SK-N-SH (cell line): ENCODE measurements at regions of chr11 and their contacts with region 1.

Region 1: GRCh38 chr11:128630367-128631230 is 43.2 kb upstream of the ETS1 start:
- DNase-seq: peak; percentile 83
- H3K4me3 ChIP-seq: peak overlapping the region in 1 of 2 experiments; percentile 50; a peak in 1 of 4 replicates
- H3K27ac ChIP-seq: peak overlapping the region; percentile 27 to 50; a peak in 2 of 4 replicates
- H3K4me1 ChIP-seq: peaks cover 0 to 14% of the 10 kb centered on the region in 2 experiments; a peak in 2 of 4 replicates
- H3K27me3 ChIP-seq: no peaks in the 10 kb centered on the region
- CTCF ChIP-seq: peak; percentile 97
- EP300 ChIP-seq: no peak
- RAD21 ChIP-seq: peak; percentile 98

Region 2: DNA sequence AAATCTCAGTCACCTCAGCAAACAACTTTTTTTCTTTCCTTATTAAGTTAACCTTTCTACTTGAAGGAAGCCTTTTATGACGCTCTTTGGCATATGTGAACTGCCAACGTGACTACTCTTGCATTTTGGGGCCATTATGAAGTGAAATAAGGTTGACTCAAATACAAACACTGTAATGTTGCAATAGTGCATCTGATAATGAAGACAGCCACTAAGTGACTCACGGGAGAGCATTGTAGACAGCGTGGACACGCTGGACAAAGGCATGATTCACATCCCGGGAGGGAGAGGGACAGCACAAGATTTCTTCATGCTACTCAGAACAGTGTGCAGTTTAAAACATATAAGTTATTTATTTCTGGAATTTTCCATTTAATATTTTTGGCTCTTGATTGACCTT is 604.0 kb before region 1 on chr11:
- CTCF ChIA-PET with region 1: interaction called, 13 read pairs
- POLR2A ChIA-PET with region 1: no interaction called
- DNase-seq: no peak
- H3K4me3 ChIP-seq: no peak overlapping the region
- H3K27ac ChIP-seq: peak overlapping the region in 1 of 2 experiments; percentile 69; a peak in 2 of 4 replicates
- H3K4me1 ChIP-seq: peaks cover 5 to 14% of the 10 kb centered on the region in 2 experiments; a peak in 2 of 4 replicates
- H3K27me3 ChIP-seq: no peaks in the 10 kb centered on the region
- CTCF ChIP-seq: no peak
- EP300 ChIP-seq: peak in 1 of 2 experiments; percentile 88; a peak in 2 of 4 replicates
- RAD21 ChIP-seq: no peak

Region 3: GRCh38 chr11:128180446-128181087 is 450.0 kb before region 1 on chr11:
- CTCF ChIA-PET with region 1: interaction called, 16 read pairs
- POLR2A ChIA-PET with region 1: no interaction called
- DNase-seq: no peak
- H3K4me3 ChIP-seq: no peak overlapping the region
- H3K27ac ChIP-seq: peak overlapping the region; percentile 39 to 64
- H3K4me1 ChIP-seq: peaks cover 24 to 29% of the 10 kb centered on the region in 2 experiments
- H3K27me3 ChIP-seq: no peaks in the 10 kb centered on the region
- CTCF ChIP-seq: no peak
- EP300 ChIP-seq: peak in 1 of 2 experiments; percentile 87; a peak in 2 of 4 replicates
- RAD21 ChIP-seq: no peak

Region 4: GRCh38 chr11:128299132-128299726 is 331.4 kb before region 1 on chr11:
- CTCF ChIA-PET with region 1: interaction called, 11 read pairs
- POLR2A ChIA-PET with region 1: no interaction called
- DNase-seq: no peak
- H3K4me3 ChIP-seq: no peak overlapping the region
- H3K27ac ChIP-seq: no peak overlapping the region
- H3K4me1 ChIP-seq: peaks cover 0 to 20% of the 10 kb centered on the region in 2 experiments; a peak in 2 of 4 replicates
- H3K27me3 ChIP-seq: no peaks in the 10 kb centered on the region
- CTCF ChIP-seq: no peak
- EP300 ChIP-seq: no peak
- RAD21 ChIP-seq: no peak

Region 5: DNA sequence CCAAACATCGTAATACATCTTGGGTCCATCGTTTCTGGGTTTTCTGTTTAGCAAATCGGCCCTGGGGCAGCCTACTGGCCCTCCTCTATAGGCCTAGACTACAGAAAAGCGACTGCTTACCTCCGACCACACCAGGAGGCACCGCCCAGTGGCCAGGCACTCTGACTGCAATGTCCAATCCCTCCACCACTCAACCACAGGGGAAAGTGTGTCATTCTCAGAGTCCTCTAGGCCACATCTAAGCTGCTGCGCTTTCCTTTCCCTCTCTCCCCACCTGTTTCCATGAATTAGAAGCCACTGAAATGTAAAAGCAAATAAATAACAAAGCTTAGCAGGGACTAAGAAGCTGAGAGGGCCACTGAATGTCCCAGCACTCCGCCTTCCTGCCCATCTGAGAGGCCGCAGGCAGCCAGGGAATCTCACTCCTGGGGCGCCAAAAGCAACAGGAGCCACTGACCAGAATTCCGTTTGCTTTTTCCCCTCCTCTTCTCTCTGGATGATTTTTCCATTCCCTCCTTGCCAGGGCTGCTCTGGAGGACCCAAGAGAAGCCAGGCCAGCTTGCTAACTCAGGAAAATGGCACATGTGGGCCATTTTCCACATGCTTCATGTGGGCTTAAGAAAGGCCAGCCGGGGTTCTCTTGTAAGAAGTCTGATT is 13.2 kb after region 1 on chr11:
- CTCF ChIA-PET with region 1: interaction called, 13 read pairs
- POLR2A ChIA-PET with region 1: no interaction called
- DNase-seq: no peak
- H3K4me3 ChIP-seq: no peak overlapping the region
- H3K27ac ChIP-seq: no peak overlapping the region
- H3K4me1 ChIP-seq: no peaks in the 10 kb centered on the region
- H3K27me3 ChIP-seq: no peaks in the 10 kb centered on the region
- CTCF ChIP-seq: peak; percentile 13; the same call in 1 of the 2 replicates
- EP300 ChIP-seq: no peak
- RAD21 ChIP-seq: no peak

Region 6: GRCh38 chr11:128757235-128757711 is 126.7 kb after region 1 on chr11:
- CTCF ChIA-PET with region 1: no interaction called
- POLR2A ChIA-PET with region 1: no interaction called
- DNase-seq: no peak
- H3K4me3 ChIP-seq: no peak overlapping the region
- H3K27ac ChIP-seq: peak overlapping the region in 1 of 2 experiments; percentile 92; a peak in 1 of 4 replicates
- H3K4me1 ChIP-seq: peaks cover 0 to 19% of the 10 kb centered on the region in 2 experiments; a peak in 3 of 4 replicates
- H3K27me3 ChIP-seq: no peaks in the 10 kb centered on the region
- CTCF ChIP-seq: peak; percentile 51
- EP300 ChIP-seq: no peak
- RAD21 ChIP-seq: no peak